Right ventricle myocardium superior (tissue), 1 donor: ENCODE measurements at regions of chr13 and their contacts with region 1.

Region 1: GRCh38 chr13:26698392-26699196 is 62.0 kb downstream of the GPR12 start:
- DNase-seq: peak; percentile 88
- ATAC-seq: peak; percentile 91

Region 2: GRCh38 chr13:26186118-26186870 is 512.3 kb before region 1 on chr13:
- intact Hi-C with region 1: loop called (anchors 10 kb)
- DNase-seq: peak; percentile 92
- ATAC-seq: peak; percentile 96

Region 3: DNA sequence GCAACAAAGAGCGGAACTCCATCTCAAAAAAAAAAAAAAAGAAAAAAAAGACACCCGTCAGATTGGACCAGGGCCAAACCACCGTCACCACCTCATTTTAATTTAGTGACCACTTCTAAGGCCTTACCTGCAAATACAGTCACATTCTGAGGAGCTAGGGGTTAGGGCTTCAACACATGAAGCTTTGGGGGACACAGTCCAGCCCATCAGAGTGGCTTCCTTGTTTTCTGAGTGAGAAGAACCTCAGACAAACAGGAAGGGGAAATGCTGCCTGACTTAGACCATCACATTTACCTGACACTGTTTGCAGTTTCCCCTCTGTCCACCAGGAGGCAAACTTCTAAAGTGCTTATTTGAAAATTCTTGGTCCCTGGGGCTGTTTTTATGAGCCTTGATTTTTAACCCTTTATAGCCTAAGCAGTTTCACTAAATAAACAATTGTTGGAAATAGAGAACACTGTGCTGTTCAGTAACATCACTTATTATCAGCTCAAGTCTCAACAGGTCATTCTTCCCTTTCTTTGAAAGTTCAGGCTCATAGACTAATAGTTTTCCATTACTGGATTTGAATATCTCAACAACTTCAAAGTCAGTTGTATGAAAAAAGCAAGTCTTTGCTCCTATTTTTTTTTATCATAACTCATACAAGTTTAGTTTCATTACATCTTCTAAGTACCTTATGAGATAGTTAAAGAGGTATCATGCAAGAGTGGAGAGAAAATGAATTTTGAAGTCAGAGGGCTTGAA is 216.0 kb before region 1 on chr13:
- intact Hi-C with region 1: loop called (anchors 5 kb)
- DNase-seq: no peak
- ATAC-seq: peak; percentile 39

Region 4: GRCh38 chr13:26861941-26862340 is 163.3 kb after region 1 on chr13:
- intact Hi-C with region 1: no loop called
- DNase-seq: no peak
- ATAC-seq: no peak